ENCODE measurements at regions of chr21 and their contacts with region 1.

Region 1: GRCh38 chr21:45130324-45130774 is 56.0 kb downstream of the ADARB1 start:
- DNase-seq: no peak
- ATAC-seq: no peak
- H3K4me3 Mint-ChIP-seq: no peak overlapping the region
- H3K27ac Mint-ChIP-seq: no peak overlapping the region
- H3K4me1 Mint-ChIP-seq: peaks cover 64% of the 10 kb centered on the region
- H3K27me3 Mint-ChIP-seq: no peaks in the 10 kb centered on the region
- CTCF ChIP-seq: no peak

Region 2: DNA sequence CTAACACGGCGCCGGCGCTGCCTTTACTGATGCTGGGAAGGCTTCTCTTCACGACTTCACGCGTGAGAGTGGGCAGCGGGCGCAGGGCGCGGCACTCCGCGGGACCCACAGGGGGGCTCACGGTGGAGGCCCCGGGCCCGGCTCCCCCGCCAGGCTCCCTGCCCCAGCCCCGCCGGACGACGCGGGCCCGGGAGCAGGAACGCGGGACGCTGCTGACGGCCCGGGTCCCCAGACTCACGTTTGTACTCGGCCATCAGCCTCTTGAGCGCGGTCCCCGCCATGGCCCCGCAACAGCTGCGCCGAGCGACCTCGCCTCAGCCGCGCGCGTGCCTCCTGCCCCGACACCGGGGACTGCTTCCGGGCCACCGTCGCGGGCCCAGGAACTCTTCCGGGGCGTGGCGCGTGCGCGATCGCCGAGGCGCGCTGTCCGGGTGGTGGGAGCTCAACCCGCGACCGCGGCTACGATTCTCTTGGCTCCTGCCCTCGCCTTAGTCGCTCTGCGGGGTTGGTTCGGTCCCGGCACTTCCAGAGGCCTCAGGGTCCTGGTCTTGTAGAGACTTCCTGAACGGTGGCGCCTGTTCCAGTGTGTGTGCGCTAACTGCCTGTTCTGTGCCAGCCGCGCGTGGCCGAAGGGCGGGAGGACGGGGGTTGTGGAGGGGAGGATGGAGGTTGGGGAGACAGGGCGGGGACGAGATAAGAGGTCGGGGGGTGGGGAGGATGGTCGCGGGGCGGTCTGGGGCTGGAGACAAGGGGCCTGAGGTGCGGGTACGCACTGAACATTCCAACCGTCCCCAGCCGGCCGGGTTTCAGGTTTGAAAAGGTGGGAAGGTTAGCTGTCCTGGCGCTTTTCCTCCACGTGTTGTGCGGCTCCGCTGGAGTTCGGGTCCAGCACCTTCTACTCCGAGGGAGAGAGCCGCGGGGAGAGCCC is 328.6 kb before region 1 on chr21 and contains the start of gene UBE2G2:
- CTCF ChIA-PET with region 1: interaction called, 3 read pairs
- POLR2A ChIA-PET with region 1: no interaction called
- intact Hi-C with region 1: loop called (anchors 1 kb)
- DNase-seq: peak; percentile 92
- ATAC-seq: peak; percentile 95
- H3K4me3 Mint-ChIP-seq: peak within 1 kb of the TSS; percentile 99
- H3K27ac Mint-ChIP-seq: peak within 1 kb of the TSS; percentile 91
- H3K4me1 Mint-ChIP-seq: peaks cover 41% of the 10 kb centered on the region
- H3K27me3 Mint-ChIP-seq: no peaks in the 10 kb centered on the region
- CTCF ChIP-seq: no peak
- total RNA-seq, gene UBE2G2: 102 and 108 TPM in 2 replicates

Region 3: DNA sequence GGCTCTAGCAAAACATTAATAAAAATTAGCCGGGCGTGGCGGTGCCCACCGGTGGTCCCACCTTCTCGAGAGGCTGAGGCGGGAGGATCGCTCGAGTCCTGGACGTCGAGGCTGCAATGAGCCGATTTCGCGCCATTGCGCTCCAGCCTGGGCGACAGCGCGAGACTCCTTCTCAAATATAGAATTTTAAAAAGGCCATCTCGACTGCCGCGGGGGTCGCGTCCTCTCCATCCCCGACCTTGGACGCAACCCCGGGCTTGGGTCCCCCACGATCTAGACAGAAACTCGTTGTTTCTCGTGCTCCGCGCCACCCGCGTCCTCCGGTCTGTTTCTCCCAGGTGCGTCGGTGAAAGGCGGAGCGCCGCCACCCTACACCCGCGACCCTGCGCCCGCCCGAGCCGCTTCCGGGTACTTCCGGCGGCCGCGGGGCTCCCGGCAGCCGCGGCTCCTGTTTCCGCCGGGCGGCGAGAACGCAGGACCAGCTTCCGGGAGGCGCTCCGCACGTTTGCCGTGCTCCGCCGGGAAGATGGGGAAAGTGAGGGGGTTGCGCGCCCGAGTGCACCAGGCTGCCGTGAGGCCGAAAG is 190.7 kb before region 1 on chr21 and contains the start of gene SLX9:
- CTCF ChIA-PET with region 1: interaction called, 224 read pairs
- POLR2A ChIA-PET with region 1: no interaction called
- intact Hi-C with region 1: no loop called
- DNase-seq: peak; percentile 80
- ATAC-seq: peak; percentile 92
- H3K4me3 Mint-ChIP-seq: peak within 1 kb of the TSS; percentile 88
- H3K27ac Mint-ChIP-seq: peak within 1 kb of the TSS; percentile 84
- H3K4me1 Mint-ChIP-seq: peaks cover 42% of the 10 kb centered on the region
- H3K27me3 Mint-ChIP-seq: no peaks in the 10 kb centered on the region
- CTCF ChIP-seq: no peak
- total RNA-seq, gene SLX9: 26.0 and 34.7 TPM in 2 replicates

Region 4: GRCh38 chr21:45011911-45012660 is 118.3 kb before region 1 on chr21:
- CTCF ChIA-PET with region 1: interaction called, 3 read pairs
- POLR2A ChIA-PET with region 1: no interaction called
- intact Hi-C with region 1: loop called (anchors 10 kb)
- DNase-seq: no peak
- ATAC-seq: no peak
- H3K4me3 Mint-ChIP-seq: no peak overlapping the region
- H3K27ac Mint-ChIP-seq: no peak overlapping the region
- H3K4me1 Mint-ChIP-seq: no peaks in the 10 kb centered on the region
- H3K27me3 Mint-ChIP-seq: peaks cover 42% of the 10 kb centered on the region
- CTCF ChIP-seq: no peak

Region 5: GRCh38 chr21:45074048-45074817 is 56.1 kb before region 1 on chr21 and contains the start of gene ADARB1:
- CTCF ChIA-PET with region 1: interaction called, 12 read pairs
- POLR2A ChIA-PET with region 1: interaction called, 3 read pairs
- intact Hi-C with region 1: loop called (anchors 1 kb)
- DNase-seq: peak; percentile 74
- ATAC-seq: peak; percentile 79
- H3K4me3 Mint-ChIP-seq: peak within 1 kb of the TSS; percentile 89
- H3K27ac Mint-ChIP-seq: peak within 1 kb of the TSS; percentile 82
- H3K4me1 Mint-ChIP-seq: peaks cover 41% of the 10 kb centered on the region
- H3K27me3 Mint-ChIP-seq: no peaks in the 10 kb centered on the region
- CTCF ChIP-seq: no peak
- total RNA-seq, gene ADARB1: 21.6 and 22.6 TPM in 2 replicates

Region 6: GRCh38 chr21:45109831-45110492 is 20.4 kb before region 1 on chr21:
- CTCF ChIA-PET with region 1: interaction called, 212 read pairs
- POLR2A ChIA-PET with region 1: interaction called, 9 read pairs
- intact Hi-C with region 1: loop called (anchors 1 kb)
- DNase-seq: peak; percentile 55
- ATAC-seq: peak; percentile 84
- H3K4me3 Mint-ChIP-seq: peak overlapping the region; percentile 82
- H3K27ac Mint-ChIP-seq: peak overlapping the region; percentile 90
- H3K4me1 Mint-ChIP-seq: peaks cover 99% of the 10 kb centered on the region
- H3K27me3 Mint-ChIP-seq: no peaks in the 10 kb centered on the region
- CTCF ChIP-seq: no peak

Region 7: GRCh38 chr21:45140346-45140940 is 10.1 kb after region 1 on chr21:
- CTCF ChIA-PET with region 1: interaction called, 84 read pairs
- POLR2A ChIA-PET with region 1: no interaction called
- intact Hi-C with region 1: no loop called
- DNase-seq: peak; percentile 46
- ATAC-seq: peak; percentile 97
- H3K4me3 Mint-ChIP-seq: no peak overlapping the region
- H3K27ac Mint-ChIP-seq: no peak overlapping the region
- H3K4me1 Mint-ChIP-seq: peaks cover 15% of the 10 kb centered on the region
- H3K27me3 Mint-ChIP-seq: no peaks in the 10 kb centered on the region
- CTCF ChIP-seq: no peak